ENCODE measurements at regions of chr2 and their contacts with region 1.

Region 1: GRCh38 chr2:233443468-233444183 is 89.3 kb downstream of the DGKD start:
- DNase-seq: peak; percentile 86
- H3K4me3 Mint-ChIP-seq: no peak overlapping the region
- H3K27ac Mint-ChIP-seq: peak overlapping the region; percentile 40
- H3K4me1 Mint-ChIP-seq: peaks cover 19% of the 10 kb centered on the region
- H3K27me3 Mint-ChIP-seq: no peaks in the 10 kb centered on the region

Region 2: DNA sequence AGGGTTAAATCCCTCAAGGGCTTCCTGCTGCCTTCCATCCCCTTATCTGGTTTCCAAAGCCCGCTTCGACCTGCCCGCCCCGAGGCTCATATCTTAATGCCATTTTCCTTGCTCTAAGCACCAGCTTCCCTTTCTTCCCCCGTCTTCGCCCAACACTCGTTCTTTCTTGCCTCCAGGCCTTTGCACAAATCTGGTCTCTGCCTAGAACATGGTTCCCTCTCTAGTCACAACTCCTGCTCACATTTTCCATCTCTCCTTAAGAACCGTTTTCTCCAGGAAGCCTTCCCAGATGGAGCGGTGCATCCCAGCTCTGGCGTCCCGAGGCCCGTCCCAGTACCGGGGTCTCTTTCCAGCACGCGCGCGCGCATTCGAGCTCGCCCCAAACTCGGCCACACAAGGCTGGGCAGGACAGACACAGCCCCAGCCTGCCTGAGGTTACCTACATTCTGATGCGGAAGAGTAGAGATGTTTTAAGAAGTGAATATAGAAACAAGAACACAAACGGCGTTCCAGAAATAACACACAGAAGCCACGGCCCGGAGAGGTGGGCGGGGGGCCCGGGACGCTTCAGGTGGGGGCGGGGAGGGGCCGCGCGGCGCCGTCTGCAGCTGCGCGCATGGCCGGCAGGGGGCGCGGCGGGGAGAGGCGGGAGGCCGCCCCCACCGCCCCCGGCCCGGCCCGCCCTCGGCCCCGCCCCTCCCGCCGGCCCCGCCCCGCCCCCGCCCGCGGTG is 89.7 kb before region 1 on chr2 and contains the start of gene DGKD:
- CTCF ChIA-PET with region 1: interaction called, 17 read pairs
- POLR2A ChIA-PET with region 1: no interaction called
- DNase-seq: peak; percentile 77
- H3K4me3 Mint-ChIP-seq: peak within 1 kb of the TSS; percentile 86
- H3K27ac Mint-ChIP-seq: peak within 1 kb of the TSS; percentile 84
- H3K4me1 Mint-ChIP-seq: peaks cover 75% of the 10 kb centered on the region
- H3K27me3 Mint-ChIP-seq: no peaks in the 10 kb centered on the region
- total RNA-seq, gene DGKD: 77.8 to 78.3 TPM

Region 3: GRCh38 chr2:233404222-233404621 is 39.4 kb before region 1 on chr2:
- CTCF ChIA-PET with region 1: interaction called, 295 read pairs
- POLR2A ChIA-PET with region 1: interaction called, 16 read pairs
- DNase-seq: peak; percentile 76
- H3K4me3 Mint-ChIP-seq: no peak overlapping the region
- H3K27ac Mint-ChIP-seq: peak overlapping the region; percentile 34
- H3K4me1 Mint-ChIP-seq: peaks cover 41% of the 10 kb centered on the region
- H3K27me3 Mint-ChIP-seq: no peaks in the 10 kb centered on the region

Region 4: GRCh38 chr2:233413559-233414272 is 29.9 kb before region 1 on chr2:
- CTCF ChIA-PET with region 1: interaction called, 295 read pairs
- POLR2A ChIA-PET with region 1: interaction called, 15 read pairs
- DNase-seq: no peak
- H3K4me3 Mint-ChIP-seq: no peak overlapping the region
- H3K27ac Mint-ChIP-seq: no peak overlapping the region
- H3K4me1 Mint-ChIP-seq: peaks cover 88% of the 10 kb centered on the region
- H3K27me3 Mint-ChIP-seq: no peaks in the 10 kb centered on the region

Region 5: DNA sequence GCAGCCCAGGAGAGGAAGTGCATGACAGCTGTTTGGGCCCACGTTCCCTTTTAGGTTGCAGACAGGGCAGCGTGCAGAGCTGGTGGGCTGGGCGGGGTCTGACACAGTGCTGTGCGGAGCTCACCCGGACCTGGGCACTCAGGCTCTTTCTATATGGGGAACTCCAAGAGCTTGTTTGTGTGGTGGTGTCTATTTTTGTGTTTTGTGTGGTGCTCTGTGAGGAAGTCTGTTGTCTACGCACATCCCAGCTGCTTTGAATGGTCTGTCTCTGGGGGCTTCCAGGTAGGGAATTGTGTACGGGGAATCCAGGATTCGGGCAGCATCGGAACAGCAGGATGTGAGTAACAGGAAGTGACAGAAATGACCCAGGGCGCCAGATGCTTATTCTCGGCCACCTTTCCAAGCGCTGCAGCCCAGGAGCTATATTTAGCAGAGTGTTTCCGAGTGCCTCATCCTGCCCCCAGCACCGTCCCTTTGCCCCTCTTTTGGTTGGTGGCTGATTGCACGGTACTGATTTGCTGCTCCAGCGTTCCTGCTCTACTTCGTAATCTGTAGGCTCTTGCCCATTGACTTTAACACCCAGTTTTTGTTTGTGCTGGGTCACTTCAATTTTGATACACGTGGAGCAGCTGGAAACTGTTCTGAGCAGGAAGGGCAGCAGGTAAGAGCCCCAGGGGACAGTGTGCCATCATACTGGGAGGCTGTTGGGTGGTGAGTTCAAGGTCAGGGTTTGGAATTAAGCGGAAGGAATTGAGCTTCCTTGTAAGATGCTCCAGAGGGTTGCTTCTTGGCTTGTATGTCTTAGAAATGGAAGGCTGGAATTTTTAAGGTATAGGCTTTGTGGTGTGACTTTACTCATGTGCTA is 24.6 kb before region 1 on chr2:
- CTCF ChIA-PET with region 1: interaction called, 35 read pairs
- POLR2A ChIA-PET with region 1: interaction called, 15 read pairs
- DNase-seq: peak; percentile 65
- H3K4me3 Mint-ChIP-seq: peak overlapping the region; percentile 76
- H3K27ac Mint-ChIP-seq: peak overlapping the region; percentile 99
- H3K4me1 Mint-ChIP-seq: peaks cover 97% of the 10 kb centered on the region
- H3K27me3 Mint-ChIP-seq: no peaks in the 10 kb centered on the region

Region 6: GRCh38 chr2:233426619-233427342 is 16.8 kb before region 1 on chr2:
- CTCF ChIA-PET with region 1: interaction called, 35 read pairs
- POLR2A ChIA-PET with region 1: interaction called, 6 read pairs
- DNase-seq: peak; percentile 42
- H3K4me3 Mint-ChIP-seq: no peak overlapping the region
- H3K27ac Mint-ChIP-seq: peak overlapping the region; percentile 9
- H3K4me1 Mint-ChIP-seq: peaks cover 84% of the 10 kb centered on the region
- H3K27me3 Mint-ChIP-seq: no peaks in the 10 kb centered on the region